Posterior vena cava (tissue), 2 donors: ENCODE measurements at regions of chr13 and their contacts with region 1.

Region 1: GRCh38 chr13:27362064-27362883 is 62.1 kb upstream of the GTF3A start:
- DNase-seq: peak; percentile 96

Region 2: GRCh38 chr13:26946684-26947343 is 415.5 kb before region 1 on chr13:
- intact Hi-C with region 1: loop called (anchors 2 to 5 kb)
- DNase-seq: no peak

Region 3: GRCh38 chr13:26985285-26985878 is 376.9 kb before region 1 on chr13:
- intact Hi-C with region 1: loop called (anchors 5 to 10 kb)
- DNase-seq: peak; percentile 72

Region 4: DNA sequence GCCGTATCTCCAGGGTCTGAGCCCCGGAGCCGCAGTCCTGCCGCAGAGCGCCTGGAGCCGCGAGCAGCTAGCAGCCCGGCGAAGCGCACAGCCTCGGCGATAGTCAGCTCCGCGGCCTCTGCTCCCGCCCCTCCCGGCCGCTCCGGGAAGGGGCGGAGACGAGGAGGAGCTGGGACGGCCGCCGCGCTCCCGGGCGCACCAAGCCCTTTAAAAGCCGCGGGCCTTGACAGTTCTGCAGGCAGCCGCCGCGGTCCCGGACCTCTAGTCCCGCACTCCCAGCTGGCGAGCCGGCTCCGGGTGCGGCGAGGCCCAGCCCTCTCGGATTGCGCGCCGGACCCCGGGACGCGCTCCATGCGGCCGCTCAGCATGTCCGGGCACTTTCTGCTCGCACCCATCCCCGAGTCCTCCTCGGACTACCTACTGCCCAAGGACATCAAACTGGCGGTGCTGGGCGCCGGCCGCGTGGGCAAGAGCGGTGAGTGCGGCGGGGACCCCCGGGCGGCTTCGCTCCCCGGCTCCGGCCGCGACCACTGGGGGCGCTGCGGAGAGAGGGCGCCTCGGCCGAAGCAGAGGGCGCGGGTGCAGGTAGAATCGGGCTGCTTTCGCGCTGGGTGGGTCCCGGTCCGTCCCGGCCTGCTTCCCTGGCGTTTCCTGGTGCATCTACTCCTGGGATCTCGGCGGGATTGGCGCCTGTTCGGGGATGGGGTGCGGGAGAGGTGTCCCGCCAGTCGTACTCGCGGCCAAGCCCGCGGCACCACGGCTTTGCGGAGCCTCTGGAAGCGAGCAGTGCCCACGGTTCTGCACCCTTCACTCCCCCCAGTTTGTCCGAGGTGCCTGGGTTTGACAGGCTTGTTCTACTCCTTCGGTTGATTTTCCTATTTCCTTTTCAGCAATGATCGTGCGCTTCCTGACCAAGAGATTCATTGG is 91.4 kb before region 1 on chr13 and contains the start of gene RASL11A:
- intact Hi-C with region 1: loop called in 1 of 2 experiments (anchors 10 kb)
- DNase-seq: peak; percentile 95
- total RNA-seq, gene RASL11A: 39.7 to 46.4 TPM

Region 5: GRCh38 chr13:27406178-27406939 is 44.1 kb after region 1 on chr13:
- intact Hi-C with region 1: no loop called
- DNase-seq: no peak

Region 6: GRCh38 chr13:27826379-27827353 is 464.4 kb after region 1 on chr13:
- intact Hi-C with region 1: loop called in 1 of 2 experiments (anchors 10 kb)
- DNase-seq: peak; percentile 93

Region 7: DNA sequence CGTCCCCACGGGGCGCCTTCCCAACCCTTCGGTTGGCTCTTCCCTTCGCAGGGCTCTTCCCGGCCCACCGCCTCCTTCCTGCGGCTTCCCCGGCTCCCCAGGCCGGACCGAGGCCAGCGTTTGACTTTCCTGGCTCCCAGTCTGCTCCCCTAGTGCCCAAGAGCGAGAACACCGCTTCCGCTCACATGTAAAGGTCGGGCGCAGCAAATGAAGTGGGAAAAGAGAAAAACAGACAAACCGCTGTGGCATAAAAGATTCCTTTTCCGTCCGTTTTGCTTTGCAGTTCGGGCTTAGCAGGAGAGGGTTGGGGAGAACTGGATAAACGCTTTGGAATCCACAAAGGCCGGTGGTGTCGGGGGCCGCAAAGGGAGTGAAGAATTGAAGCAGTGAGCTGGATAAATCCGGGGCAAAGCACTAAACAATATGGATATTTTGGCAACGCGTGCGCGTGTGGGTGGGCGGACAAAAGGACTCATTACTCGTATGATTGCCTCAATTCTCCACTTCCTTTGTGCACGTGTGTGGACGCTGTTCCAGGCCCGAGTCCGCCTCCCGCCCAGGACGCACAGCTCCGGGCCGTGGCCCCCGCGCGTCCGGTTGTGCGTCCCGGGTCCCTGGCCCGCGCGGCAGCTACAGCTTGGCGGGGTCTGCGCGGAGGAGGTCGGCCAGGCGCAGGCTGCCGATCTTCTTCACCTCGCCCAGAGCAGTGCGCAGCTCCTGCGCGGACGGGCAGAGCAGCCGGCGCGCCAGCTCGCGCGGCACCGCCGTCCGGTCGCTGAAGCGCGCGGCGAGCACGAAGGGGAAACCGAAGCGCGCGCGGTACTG is 615.4 kb after region 1 on chr13:
- intact Hi-C with region 1: loop called (anchors 5 to 10 kb)
- DNase-seq: no peak